CD8-positive, alpha-beta T cell (primary cell): ENCODE measurements at regions of chr1 and their contacts with region 1.

Region 1: DNA sequence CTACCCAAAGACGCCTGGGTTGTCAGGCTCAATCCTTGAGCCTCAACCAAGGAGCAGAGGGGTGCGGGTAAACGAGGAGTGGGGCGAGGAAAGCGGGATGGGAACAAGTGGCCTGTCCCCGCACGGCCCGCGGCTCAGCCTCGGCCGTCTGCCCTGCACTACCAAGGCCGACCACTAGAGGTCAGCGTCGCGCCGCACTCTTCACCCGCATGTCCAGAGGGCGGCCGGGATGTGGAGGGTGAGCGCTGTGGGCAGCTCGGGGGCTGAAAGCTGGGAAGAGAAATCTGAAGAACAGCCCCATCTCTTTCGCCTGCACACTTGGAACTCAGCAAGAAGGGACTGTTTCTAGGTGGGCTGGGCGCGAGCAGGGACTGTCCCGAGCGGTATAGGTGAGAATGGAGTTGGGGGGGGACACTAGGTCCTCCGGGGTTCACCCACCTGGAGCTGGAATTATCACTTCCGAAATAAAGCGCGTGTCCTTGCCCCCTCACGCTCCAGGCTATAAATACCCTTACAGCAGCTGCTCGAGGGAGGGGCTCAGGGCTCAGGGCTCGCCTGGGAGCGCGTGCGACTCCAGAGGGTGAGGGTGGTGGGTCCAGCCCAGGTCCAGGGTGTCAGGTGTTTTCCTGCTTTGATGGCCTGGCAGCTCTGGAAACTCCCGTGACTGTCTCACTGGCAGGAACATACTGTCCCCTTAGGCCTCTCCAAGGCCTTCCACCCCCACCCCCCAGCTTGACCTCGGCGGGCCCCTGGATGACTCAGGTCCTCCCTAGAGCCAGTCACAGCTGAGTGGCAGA is 9.8 kb downstream of the SLC30A2 start:
- DNase-seq: peak; percentile 53 to 88 (median 79)
- ATAC-seq: peak; percentile 70
- H3K4me3 ChIP-seq: peak overlapping the region; percentile 85 to 86
- H3K4me3 Mint-ChIP-seq: peak overlapping the region; percentile 97
- H3K27ac ChIP-seq: peak overlapping the region; percentile 46 to 58
- H3K27ac Mint-ChIP-seq: peak overlapping the region; percentile 95
- H3K4me1 ChIP-seq: peaks cover 11% of the 10 kb centered on the region
- H3K4me1 Mint-ChIP-seq: peaks cover 8% of the 10 kb centered on the region
- H3K27me3 ChIP-seq: no peaks in the 10 kb centered on the region
- H3K27me3 Mint-ChIP-seq: no peaks in the 10 kb centered on the region
- CTCF ChIP-seq: peak; percentile 99

Region 2: GRCh38 chr1:25997828-25998761 is 38.1 kb before region 1 on chr1 and contains the start of gene PAFAH2:
- CTCF ChIA-PET with region 1: interaction called, 4 read pairs
- POLR2A ChIA-PET with region 1: no interaction called
- intact Hi-C with region 1: loop called in 1 of 2 experiments (anchors 5 kb)
- DNase-seq: peak; percentile 93 to 100 (median 96)
- ATAC-seq: peak; percentile 96
- H3K4me3 ChIP-seq: peak within 1 kb of the TSS; percentile 62 to 72
- H3K4me3 Mint-ChIP-seq: peak within 1 kb of the TSS; percentile 92
- H3K27ac ChIP-seq: peak within 1 kb of the TSS; percentile 79 to 87
- H3K27ac Mint-ChIP-seq: peak within 1 kb of the TSS; percentile 99
- H3K4me1 ChIP-seq: peaks cover 19% of the 10 kb centered on the region
- H3K4me1 Mint-ChIP-seq: peaks cover 42% of the 10 kb centered on the region
- H3K27me3 ChIP-seq: no peaks in the 10 kb centered on the region
- H3K27me3 Mint-ChIP-seq: no peaks in the 10 kb centered on the region
- CTCF ChIP-seq: peak; percentile 92
- total RNA-seq, gene PAFAH2: 9.1 to 11.8 TPM

Region 3: GRCh38 chr1:26094076-26094669 is 58.0 kb after region 1 on chr1:
- CTCF ChIA-PET with region 1: no interaction called
- POLR2A ChIA-PET with region 1: no interaction called
- intact Hi-C with region 1: no loop called
- DNase-seq: no peak
- ATAC-seq: no peak
- H3K4me3 ChIP-seq: no peak overlapping the region
- H3K4me3 Mint-ChIP-seq: no peak overlapping the region
- H3K27ac ChIP-seq: no peak overlapping the region
- H3K27ac Mint-ChIP-seq: no peak overlapping the region
- H3K4me1 ChIP-seq: no peaks in the 10 kb centered on the region
- H3K4me1 Mint-ChIP-seq: no peaks in the 10 kb centered on the region
- H3K27me3 ChIP-seq: peaks cover 0 to 6% of the 10 kb centered on the region in 2 experiments
- H3K27me3 Mint-ChIP-seq: peaks cover 27% of the 10 kb centered on the region
- CTCF ChIP-seq: no peak

Region 4: GRCh38 chr1:26145041-26145959 is 109.1 kb after region 1 on chr1:
- CTCF ChIA-PET with region 1: interaction called, 15 read pairs
- POLR2A ChIA-PET with region 1: no interaction called
- intact Hi-C with region 1: loop called (anchors 1 to 5 kb)
- DNase-seq: peak in 8 of 9 experiments; percentile 62 to 88 (median 81)
- ATAC-seq: peak; percentile 95
- H3K4me3 ChIP-seq: no peak overlapping the region
- H3K4me3 Mint-ChIP-seq: no peak overlapping the region
- H3K27ac ChIP-seq: no peak overlapping the region
- H3K27ac Mint-ChIP-seq: no peak overlapping the region
- H3K4me1 ChIP-seq: peaks cover 6% of the 10 kb centered on the region
- H3K4me1 Mint-ChIP-seq: peaks cover 5% of the 10 kb centered on the region
- H3K27me3 ChIP-seq: no peaks in the 10 kb centered on the region
- H3K27me3 Mint-ChIP-seq: no peaks in the 10 kb centered on the region
- CTCF ChIP-seq: peak; percentile 87

Region 5: GRCh38 chr1:26164036-26164860 is 128.1 kb after region 1 on chr1:
- CTCF ChIA-PET with region 1: interaction called, 6 read pairs
- POLR2A ChIA-PET with region 1: no interaction called
- intact Hi-C with region 1: loop called (anchors 2 kb)
- DNase-seq: peak in 8 of 9 experiments; percentile 28 to 76 (median 50)
- ATAC-seq: peak; percentile 76
- H3K4me3 ChIP-seq: peak overlapping the region in 1 of 2 experiments; percentile 50
- H3K4me3 Mint-ChIP-seq: peak overlapping the region; percentile 61
- H3K27ac ChIP-seq: no peak overlapping the region
- H3K27ac Mint-ChIP-seq: no peak overlapping the region
- H3K4me1 ChIP-seq: peaks cover 18% of the 10 kb centered on the region
- H3K4me1 Mint-ChIP-seq: peaks cover 10% of the 10 kb centered on the region
- H3K27me3 ChIP-seq: peaks cover 14 to 18% of the 10 kb centered on the region in 2 experiments
- H3K27me3 Mint-ChIP-seq: peaks cover 17% of the 10 kb centered on the region
- CTCF ChIP-seq: peak; percentile 84

Region 6: DNA sequence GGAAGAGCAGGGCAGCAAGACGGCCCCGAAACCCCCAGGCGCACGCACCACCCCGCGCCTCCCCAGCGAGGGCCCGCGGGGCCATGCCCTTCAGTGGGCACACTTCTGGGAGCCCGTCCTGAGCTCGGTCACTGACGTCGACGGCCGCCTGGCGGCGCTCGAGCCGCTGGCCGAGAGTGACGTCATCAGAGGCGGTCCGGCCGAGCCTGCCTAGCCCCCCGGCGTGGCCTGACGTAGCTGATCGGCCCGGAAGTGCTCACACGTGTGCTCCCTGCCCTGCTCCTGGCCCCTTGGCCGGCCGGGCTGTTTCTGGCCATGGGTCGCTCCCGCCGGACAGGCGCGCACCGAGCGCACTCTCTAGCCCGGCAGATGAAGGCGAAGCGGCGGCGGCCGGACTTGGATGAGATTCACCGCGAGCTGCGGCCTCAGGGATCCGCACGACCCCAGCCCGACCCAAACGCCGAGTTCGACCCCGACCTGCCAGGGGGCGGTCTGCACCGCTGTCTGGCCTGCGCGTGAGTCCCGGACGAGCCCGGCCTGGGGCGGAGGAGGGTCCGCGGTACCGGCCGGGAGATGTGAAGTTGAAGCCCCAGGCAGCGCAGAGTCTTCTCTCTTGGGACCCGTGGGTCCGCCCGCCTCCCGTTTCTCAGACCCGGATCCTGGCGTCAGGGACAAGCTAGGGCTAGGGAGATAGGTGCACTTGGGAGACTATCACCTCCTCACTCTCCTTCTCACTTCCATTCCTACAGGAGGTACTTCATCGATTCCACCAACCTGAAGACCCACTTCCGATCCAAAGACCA is 133.7 kb after region 1 on chr1 and contains the start of gene ZNF593:
- CTCF ChIA-PET with region 1: interaction called, 6 read pairs
- POLR2A ChIA-PET with region 1: no interaction called
- intact Hi-C with region 1: loop called (anchors 2 kb)
- DNase-seq: peak; percentile 69 to 91 (median 85)
- ATAC-seq: peak; percentile 92
- H3K4me3 ChIP-seq: peak within 1 kb of the TSS; percentile 85 to 89
- H3K4me3 Mint-ChIP-seq: peak within 1 kb of the TSS; percentile 87
- H3K27ac ChIP-seq: peak within 1 kb of the TSS; percentile 77 to 78
- H3K27ac Mint-ChIP-seq: peak within 1 kb of the TSS; percentile 88
- H3K4me1 ChIP-seq: peaks cover 11% of the 10 kb centered on the region
- H3K4me1 Mint-ChIP-seq: peaks cover 12% of the 10 kb centered on the region
- H3K27me3 ChIP-seq: no peaks in the 10 kb centered on the region
- H3K27me3 Mint-ChIP-seq: no peaks in the 10 kb centered on the region
- CTCF ChIP-seq: peak; percentile 74
- total RNA-seq, gene ZNF593: 8.1 to 8.8 TPM

Region 7: DNA sequence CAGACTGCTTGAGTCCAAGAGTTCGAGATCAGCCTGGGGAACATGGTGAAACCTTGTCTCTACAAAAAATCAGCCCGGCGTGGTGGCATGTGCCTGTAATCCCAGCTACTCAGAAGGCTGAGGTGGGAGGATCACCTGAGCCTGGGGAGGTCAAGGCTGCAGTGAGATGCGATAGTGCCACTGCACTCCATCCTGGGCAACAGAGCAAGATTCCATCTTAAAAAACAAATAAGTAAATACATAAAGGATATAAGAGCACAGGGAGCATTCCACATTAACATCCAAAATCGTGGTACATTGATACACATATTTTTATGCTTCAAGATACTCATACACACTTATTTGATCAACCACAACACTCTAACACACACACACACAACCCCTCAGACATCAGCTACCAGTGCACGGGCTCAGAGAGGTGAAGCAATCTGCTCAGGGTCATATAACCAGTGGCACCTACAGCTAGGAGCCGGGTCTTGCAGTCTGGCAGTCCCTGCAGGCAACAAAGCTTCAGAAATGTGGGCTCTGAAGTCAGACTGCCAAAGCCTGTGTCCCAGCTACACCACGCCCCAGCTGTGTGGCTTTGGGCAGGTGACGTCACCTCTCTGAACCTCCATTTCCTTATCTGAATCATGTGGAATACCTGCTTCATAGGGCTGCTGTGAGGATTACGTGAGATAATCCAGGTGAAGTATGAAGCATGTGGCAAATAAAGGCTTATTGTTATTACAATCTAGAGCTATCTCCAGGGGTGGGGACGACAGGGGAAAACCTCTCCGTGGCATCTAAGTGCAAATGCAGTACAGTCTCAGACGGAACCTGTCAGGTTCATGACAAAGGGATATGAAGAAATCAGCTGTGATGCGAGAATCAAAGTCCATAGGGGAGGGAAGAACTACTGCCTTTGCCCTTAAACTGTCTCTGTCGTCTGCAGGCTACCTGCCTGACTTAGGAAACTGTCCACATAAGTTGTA is 322.5 kb after region 1 on chr1:
- CTCF ChIA-PET with region 1: no interaction called
- POLR2A ChIA-PET with region 1: no interaction called
- intact Hi-C with region 1: loop called in 1 of 2 experiments (anchors 10 kb)
- DNase-seq: peak; percentile 52 to 90 (median 72)
- ATAC-seq: peak; percentile 81
- H3K4me3 ChIP-seq: no peak overlapping the region
- H3K4me3 Mint-ChIP-seq: peak overlapping the region; percentile 42
- H3K27ac ChIP-seq: no peak overlapping the region
- H3K27ac Mint-ChIP-seq: peak overlapping the region; percentile 84
- H3K4me1 ChIP-seq: peaks cover 36% of the 10 kb centered on the region
- H3K4me1 Mint-ChIP-seq: peaks cover 40% of the 10 kb centered on the region
- H3K27me3 ChIP-seq: peaks cover 0 to 18% of the 10 kb centered on the region in 2 experiments
- H3K27me3 Mint-ChIP-seq: peaks cover 13% of the 10 kb centered on the region
- CTCF ChIP-seq: no peak